Activated CD8-positive, alpha-beta T cell treated with anti-CD3 and anti-CD28 coated beads, Interleukin-2, amount 10 ng/mL, durations not matched to agents 7 days and 5 days (primary cell): ENCODE measurements at regions of chr6 and their contacts with region 1.

Region 1: GRCh38 chr6:1596088-1596852 is 13.4 kb upstream of the FOXC1 start:
- DNase-seq: peak; percentile 70
- ATAC-seq: peak; percentile 72
- H3K4me3 Mint-ChIP-seq: no peak overlapping the region
- H3K27ac Mint-ChIP-seq: no peak overlapping the region
- H3K4me1 Mint-ChIP-seq: peaks cover 3% of the 10 kb centered on the region
- H3K27me3 Mint-ChIP-seq: peaks cover 58% of the 10 kb centered on the region

Region 2: DNA sequence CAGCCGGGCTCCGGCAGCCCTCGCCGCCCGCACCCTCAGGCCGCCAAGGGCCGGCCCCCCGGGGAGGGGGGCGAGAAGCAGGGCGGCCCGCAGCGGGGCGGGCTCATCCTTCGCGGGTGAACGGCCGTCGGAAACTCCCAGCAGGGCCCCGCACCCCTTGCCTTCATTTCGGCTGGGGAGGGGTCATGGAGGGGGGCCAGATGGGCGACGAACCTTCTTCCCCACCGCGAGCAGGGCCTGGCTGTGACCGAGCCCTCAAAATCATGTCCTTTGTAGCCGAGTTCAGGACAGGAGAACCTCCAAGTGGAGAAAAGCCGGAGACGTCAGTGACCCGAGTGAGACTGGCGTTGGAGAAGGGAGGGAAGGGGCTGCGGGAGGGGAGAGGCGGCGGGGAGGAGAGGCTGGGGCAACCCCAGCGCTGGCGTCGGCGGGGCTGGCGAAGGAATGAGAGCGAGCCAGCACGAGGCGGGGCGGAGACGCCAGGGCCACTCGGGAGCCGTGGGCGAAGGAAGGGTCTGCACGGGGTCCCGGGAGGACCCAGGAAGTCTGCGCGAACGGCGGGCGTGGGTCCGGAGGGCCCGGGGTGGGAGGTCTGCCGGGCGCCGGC is 12.9 kb after region 1 on chr6:
- CTCF ChIA-PET with region 1: interaction called, 18 read pairs
- POLR2A ChIA-PET with region 1: no interaction called
- DNase-seq: no peak
- ATAC-seq: no peak
- H3K4me3 Mint-ChIP-seq: peak overlapping the region; percentile 42
- H3K27ac Mint-ChIP-seq: no peak overlapping the region
- H3K4me1 Mint-ChIP-seq: peaks cover 38% of the 10 kb centered on the region
- H3K27me3 Mint-ChIP-seq: peaks cover 60% of the 10 kb centered on the region

Region 3: DNA sequence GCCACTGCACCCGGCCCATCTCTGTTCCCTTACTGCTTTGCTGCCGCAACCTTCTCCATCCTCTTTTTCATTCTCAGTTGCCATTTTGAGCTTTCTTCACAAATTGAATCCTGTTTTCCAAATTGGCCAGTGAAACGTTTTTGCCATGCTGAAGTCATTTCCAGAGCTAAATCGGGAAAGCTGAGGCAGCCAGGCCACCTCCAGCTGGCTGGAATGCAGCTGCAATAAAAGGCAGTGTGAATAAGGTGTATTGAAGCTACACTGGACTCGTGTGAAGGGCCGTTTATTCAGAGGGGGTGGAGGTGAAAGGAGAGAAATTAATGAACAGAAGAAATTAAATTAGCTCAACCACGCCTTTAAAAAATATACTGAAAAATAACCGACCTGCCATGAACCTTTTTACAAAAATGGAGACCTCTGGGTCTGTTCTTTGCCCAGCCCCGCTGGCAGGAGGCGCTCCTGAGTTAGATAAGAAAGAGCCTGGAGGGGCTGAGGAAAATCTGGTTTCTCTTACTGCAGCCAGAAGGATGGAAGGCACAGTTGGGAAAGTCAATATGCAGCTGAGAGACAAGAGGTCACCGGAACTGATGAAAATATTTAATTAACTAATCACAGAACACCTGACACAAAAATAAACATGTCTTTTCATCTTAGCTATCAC is 297.3 kb after region 1 on chr6:
- CTCF ChIA-PET with region 1: no interaction called
- POLR2A ChIA-PET with region 1: no interaction called
- DNase-seq: no peak
- ATAC-seq: no peak
- H3K4me3 Mint-ChIP-seq: no peak overlapping the region
- H3K27ac Mint-ChIP-seq: no peak overlapping the region
- H3K4me1 Mint-ChIP-seq: peaks cover 7% of the 10 kb centered on the region
- H3K27me3 Mint-ChIP-seq: no peaks in the 10 kb centered on the region

Region 4: DNA sequence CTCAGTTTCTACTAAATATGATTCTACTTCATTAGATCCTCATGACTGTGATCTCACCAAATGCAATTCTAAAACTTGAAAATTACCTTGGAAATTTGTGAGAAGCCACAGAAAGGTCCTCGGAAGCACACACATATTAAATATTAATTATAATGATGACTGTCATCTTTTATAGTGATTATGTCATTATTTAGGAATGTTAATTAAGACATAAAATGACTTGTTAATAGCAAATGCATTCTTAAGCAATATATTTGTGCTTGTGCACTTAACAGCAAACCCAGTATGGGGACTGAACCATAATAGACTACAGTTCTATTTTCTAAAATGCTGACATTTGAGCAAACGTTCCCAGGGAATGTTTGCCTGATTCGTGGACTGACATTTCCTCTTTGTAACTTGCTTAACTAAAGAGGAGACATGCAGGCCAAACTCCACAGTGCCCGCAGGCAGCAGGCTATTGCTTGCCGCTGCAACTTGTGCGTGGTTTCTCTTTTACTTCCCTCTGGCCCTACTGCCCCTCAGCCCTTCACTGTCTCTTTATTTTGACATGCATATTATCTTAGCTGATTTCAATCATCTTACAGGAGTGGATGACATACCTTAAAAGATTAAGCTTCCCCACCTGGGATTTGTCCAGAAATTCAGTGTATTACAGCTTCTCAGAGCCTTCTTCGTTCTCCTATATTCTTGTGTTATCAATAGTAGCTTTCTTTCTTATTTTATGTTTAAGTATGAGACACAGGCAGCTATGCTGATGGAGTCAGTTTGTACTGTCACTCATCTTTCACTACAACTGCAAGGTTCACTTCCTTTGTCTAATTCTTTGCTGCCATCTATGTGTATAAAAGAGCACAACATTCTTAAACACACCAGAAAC is 507.6 kb after region 1 on chr6:
- CTCF ChIA-PET with region 1: interaction called, 13 read pairs
- POLR2A ChIA-PET with region 1: no interaction called
- DNase-seq: no peak
- ATAC-seq: peak; percentile 57
- H3K4me3 Mint-ChIP-seq: no peak overlapping the region
- H3K27ac Mint-ChIP-seq: no peak overlapping the region
- H3K4me1 Mint-ChIP-seq: no peaks in the 10 kb centered on the region
- H3K27me3 Mint-ChIP-seq: no peaks in the 10 kb centered on the region